Endothelial cell of umbilical vein (primary cell): ENCODE measurements at regions of chr12 and their contacts with region 1.

Region 1: GRCh38 chr12:7933255-7933729 is 2.7 kb downstream of the SLC2A3 start:
- DNase-seq: peak; percentile 93
- H3K4me3 ChIP-seq: peak overlapping the region in 2 of 3 experiments; percentile 22 to 26
- H3K27ac ChIP-seq: peak overlapping the region; percentile 88
- H3K4me1 ChIP-seq: peaks cover 37% of the 10 kb centered on the region
- H3K27me3 ChIP-seq: no peaks in the 10 kb centered on the region
- CTCF ChIP-seq: peak; percentile 58 to 80
- POLR2A ChIP-seq: no peak

Region 2: GRCh38 chr12:7602277-7602676 is 331.0 kb before region 1 on chr12:
- CTCF ChIA-PET with region 1: no interaction called
- POLR2A ChIA-PET with region 1: no interaction called
- dilution Hi-C with region 1: no loop called
- intact Hi-C with region 1: no loop called
- DNase-seq: no peak
- H3K4me3 ChIP-seq: no peak overlapping the region
- H3K27ac ChIP-seq: no peak overlapping the region
- H3K4me1 ChIP-seq: no peaks in the 10 kb centered on the region
- H3K27me3 ChIP-seq: no peaks in the 10 kb centered on the region
- CTCF ChIP-seq: no peak
- POLR2A ChIP-seq: no peak

Region 3: DNA sequence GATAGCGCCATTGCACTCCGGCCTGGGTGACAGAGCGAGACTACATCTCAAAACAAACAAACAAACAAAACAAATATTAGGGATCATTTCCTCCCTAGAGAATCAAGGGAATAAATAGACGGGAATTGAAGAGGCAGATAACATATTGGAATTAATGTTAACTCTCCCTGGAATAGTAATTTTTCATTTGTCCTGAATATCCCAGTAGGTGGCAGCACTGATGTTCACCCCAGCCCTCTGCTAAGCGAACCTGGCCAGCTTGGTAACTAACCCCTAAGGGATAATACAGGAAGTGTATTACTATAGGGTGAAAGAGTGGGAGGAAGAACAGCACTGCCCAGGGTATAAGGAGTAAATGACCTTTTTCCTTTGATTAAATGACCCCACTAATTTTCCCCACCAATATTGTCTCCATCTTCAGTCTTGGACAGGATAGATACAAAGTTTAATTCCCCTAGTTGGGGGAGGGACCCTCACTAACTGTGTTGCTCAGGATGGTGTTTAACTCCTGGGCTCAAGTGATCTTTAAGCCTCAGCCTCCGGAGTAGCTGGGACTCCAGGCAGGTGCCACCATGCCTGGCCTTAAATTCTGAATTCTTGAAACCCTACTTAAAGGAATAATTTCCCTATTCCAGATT is 101.1 kb before region 1 on chr12:
- CTCF ChIA-PET with region 1: interaction called, 12 read pairs
- POLR2A ChIA-PET with region 1: no interaction called
- dilution Hi-C with region 1: no loop called
- intact Hi-C with region 1: no loop called
- DNase-seq: peak; percentile 58
- H3K4me3 ChIP-seq: no peak overlapping the region
- H3K27ac ChIP-seq: no peak overlapping the region
- H3K4me1 ChIP-seq: no peaks in the 10 kb centered on the region
- H3K27me3 ChIP-seq: peaks cover 0 to 2% of the 10 kb centered on the region in 2 experiments
- CTCF ChIP-seq: peak; percentile 44 to 45
- POLR2A ChIP-seq: no peak

Region 4: GRCh38 chr12:7916936-7917335 is 16.4 kb before region 1 on chr12:
- CTCF ChIA-PET with region 1: interaction called, 20 read pairs
- POLR2A ChIA-PET with region 1: no interaction called
- dilution Hi-C with region 1: no loop called
- intact Hi-C with region 1: no loop called
- DNase-seq: no peak
- H3K4me3 ChIP-seq: no peak overlapping the region
- H3K27ac ChIP-seq: no peak overlapping the region
- H3K4me1 ChIP-seq: no peaks in the 10 kb centered on the region
- H3K27me3 ChIP-seq: no peaks in the 10 kb centered on the region
- CTCF ChIP-seq: no peak
- POLR2A ChIP-seq: no peak

Region 5: GRCh38 chr12:7970475-7971252 is 37.4 kb after region 1 on chr12:
- CTCF ChIA-PET with region 1: interaction called, 34 read pairs
- POLR2A ChIA-PET with region 1: interaction called, 23 read pairs
- dilution Hi-C with region 1: no loop called
- intact Hi-C with region 1: loop called (anchors 1 kb)
- DNase-seq: peak; percentile 94
- H3K4me3 ChIP-seq: peak overlapping the region; percentile 5 to 41 (median 40)
- H3K27ac ChIP-seq: peak overlapping the region; percentile 60
- H3K4me1 ChIP-seq: peaks cover 17% of the 10 kb centered on the region
- H3K27me3 ChIP-seq: no peaks in the 10 kb centered on the region
- CTCF ChIP-seq: no peak
- POLR2A ChIP-seq: peak; percentile 59

Region 6: GRCh38 chr12:7995266-7995963 is 62.1 kb after region 1 on chr12:
- CTCF ChIA-PET with region 1: interaction called, 132 read pairs
- POLR2A ChIA-PET with region 1: interaction called, 9 read pairs
- dilution Hi-C with region 1: no loop called
- intact Hi-C with region 1: loop called (anchors 1 kb)
- DNase-seq: peak; percentile 75
- H3K4me3 ChIP-seq: no peak overlapping the region
- H3K27ac ChIP-seq: no peak overlapping the region
- H3K4me1 ChIP-seq: no peaks in the 10 kb centered on the region
- H3K27me3 ChIP-seq: no peaks in the 10 kb centered on the region
- CTCF ChIP-seq: peak; percentile 61 to 76
- POLR2A ChIP-seq: no peak

Region 7: GRCh38 chr12:8032242-8033152 is 99.2 kb after region 1 on chr12 and contains the start of gene FOXJ2:
- CTCF ChIA-PET with region 1: interaction called, 14 read pairs
- POLR2A ChIA-PET with region 1: interaction called, 15 read pairs
- dilution Hi-C with region 1: no loop called
- intact Hi-C with region 1: no loop called
- DNase-seq: peak; percentile 80
- H3K4me3 ChIP-seq: peak within 1 kb of the TSS; percentile 72 to 96 (median 82)
- H3K27ac ChIP-seq: peak within 1 kb of the TSS; percentile 90
- H3K4me1 ChIP-seq: peaks cover 33% of the 10 kb centered on the region
- H3K27me3 ChIP-seq: no peaks in the 10 kb centered on the region
- CTCF ChIP-seq: no peak
- POLR2A ChIP-seq: no peak
- total RNA-seq, gene FOXJ2: 13.3 and 13.9 TPM in 2 replicates

Region 8: GRCh38 chr12:8078398-8078797 is 145.1 kb after region 1 on chr12:
- CTCF ChIA-PET with region 1: interaction called, 50 read pairs
- POLR2A ChIA-PET with region 1: interaction called, 7 read pairs
- dilution Hi-C with region 1: no loop called
- intact Hi-C with region 1: loop called (anchors 1 kb)
- DNase-seq: peak; percentile 84
- H3K4me3 ChIP-seq: no peak overlapping the region
- H3K27ac ChIP-seq: no peak overlapping the region
- H3K4me1 ChIP-seq: peaks cover 22% of the 10 kb centered on the region
- H3K27me3 ChIP-seq: no peaks in the 10 kb centered on the region
- CTCF ChIP-seq: peak; percentile 28 to 49
- POLR2A ChIP-seq: no peak